ENCODE measurements at regions of chr6 and their contacts with region 1.

Region 1: DNA sequence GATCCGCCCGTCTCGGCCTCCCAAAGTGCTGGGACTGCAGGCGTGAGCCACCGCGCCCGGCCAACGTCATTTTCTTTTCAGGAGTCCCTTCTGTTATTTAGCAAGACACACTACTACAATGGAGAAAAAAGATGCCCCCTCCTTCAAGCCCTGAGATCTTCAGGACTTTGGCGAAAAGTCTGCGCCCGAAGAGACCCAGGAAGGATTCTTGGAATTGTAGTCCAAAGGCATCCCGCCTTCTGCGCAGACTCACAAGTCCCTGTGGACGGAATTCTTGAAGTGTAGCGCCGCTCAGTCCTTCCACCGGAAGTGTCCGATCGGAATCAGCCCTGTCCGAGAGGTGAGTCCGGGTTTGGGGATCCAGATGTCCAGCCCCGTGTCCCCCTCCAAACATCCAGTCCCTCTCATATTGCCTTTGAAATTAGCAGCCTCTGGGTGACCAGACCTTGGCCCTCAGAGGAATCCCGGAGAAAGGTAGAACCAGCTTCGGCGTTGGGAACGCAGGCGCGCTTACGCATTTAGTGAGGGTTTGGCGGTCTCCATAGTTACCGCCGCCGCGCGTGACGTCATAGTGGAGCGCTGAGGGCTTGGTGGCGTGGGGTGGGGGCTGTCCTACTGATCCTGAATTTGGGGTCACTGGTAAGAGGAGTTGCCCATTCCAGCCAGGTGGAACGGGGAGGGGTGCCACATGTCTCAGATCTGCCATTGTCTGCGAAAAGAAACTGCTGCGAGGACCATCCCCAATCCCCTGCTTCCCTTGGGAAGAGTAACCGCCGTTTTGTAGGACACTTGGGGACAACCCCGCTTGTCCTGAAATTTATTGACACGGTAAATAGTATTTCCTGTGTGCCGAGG is 490 bp downstream of the ZNF165 start:
- DNase-seq: peak; percentile 92
- H3K4me3 Mint-ChIP-seq: peak overlapping the region; percentile 96
- H3K27ac Mint-ChIP-seq: peak overlapping the region; percentile 97
- H3K4me1 Mint-ChIP-seq: peaks cover 20% of the 10 kb centered on the region
- H3K27me3 Mint-ChIP-seq: no peaks in the 10 kb centered on the region

Region 2: GRCh38 chr6:27908017-27908416 is 172.8 kb before region 1 on chr6:
- CTCF ChIA-PET with region 1: no interaction called
- POLR2A ChIA-PET with region 1: no interaction called
- intact Hi-C with region 1: no loop called
- DNase-seq: no peak
- H3K4me3 Mint-ChIP-seq: no peak overlapping the region
- H3K27ac Mint-ChIP-seq: no peak overlapping the region
- H3K4me1 Mint-ChIP-seq: peaks cover 2% of the 10 kb centered on the region
- H3K27me3 Mint-ChIP-seq: peaks cover 10% of the 10 kb centered on the region

Region 3: DNA sequence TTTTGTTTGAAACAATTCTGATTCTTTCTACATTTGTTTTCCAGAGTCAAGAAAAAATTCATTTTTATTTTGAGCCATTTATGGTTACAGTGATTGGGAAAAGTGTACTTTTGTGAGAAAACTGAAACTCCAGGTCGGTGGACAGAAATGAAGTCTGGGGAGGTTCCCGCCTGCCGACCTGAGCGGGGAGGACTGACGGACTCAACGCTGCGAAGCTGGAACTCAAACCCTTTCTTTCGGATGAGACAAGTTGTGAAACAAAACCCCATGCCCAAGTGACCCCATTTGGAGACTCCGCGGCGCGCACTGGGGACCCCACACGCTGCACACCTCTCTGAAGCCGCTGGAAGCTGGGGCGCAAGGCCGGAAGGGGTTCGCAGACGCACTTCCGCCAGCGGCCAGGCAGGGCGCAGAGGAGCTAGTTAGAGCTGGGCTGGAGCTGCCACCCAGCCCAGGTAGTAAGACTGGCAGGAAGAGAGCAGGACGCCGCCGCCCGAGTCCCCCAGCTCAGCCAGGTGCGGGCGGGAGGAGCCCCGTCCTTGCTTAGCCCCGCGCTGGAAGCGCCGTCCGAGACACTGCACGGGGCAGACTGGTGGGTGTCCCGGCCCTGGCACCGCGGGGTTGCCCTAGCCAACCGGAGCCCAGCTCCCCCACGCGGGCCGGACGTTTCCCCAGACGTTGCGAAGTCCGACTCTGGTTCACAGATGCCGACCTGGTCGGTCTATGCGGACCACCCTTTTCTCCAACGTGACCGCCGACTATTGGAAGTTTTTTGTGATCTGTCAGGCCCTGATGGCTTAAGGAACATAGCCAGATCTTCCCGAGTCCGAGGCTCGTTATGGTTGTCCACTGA is 23.8 kb after region 1 on chr6:
- CTCF ChIA-PET with region 1: no interaction called
- POLR2A ChIA-PET with region 1: interaction called, 8 read pairs
- intact Hi-C with region 1: loop called (anchors 1 kb)
- DNase-seq: peak; percentile 89
- H3K4me3 Mint-ChIP-seq: peak overlapping the region; percentile 80
- H3K27ac Mint-ChIP-seq: peak overlapping the region; percentile 88
- H3K4me1 Mint-ChIP-seq: peaks cover 4% of the 10 kb centered on the region
- H3K27me3 Mint-ChIP-seq: peaks cover 4% of the 10 kb centered on the region

Region 4: GRCh38 chr6:28124102-28124970 is 43.5 kb after region 1 on chr6 and contains the start of gene ZSCAN16:
- CTCF ChIA-PET with region 1: no interaction called
- POLR2A ChIA-PET with region 1: no interaction called
- intact Hi-C with region 1: no loop called
- DNase-seq: peak; percentile 84
- H3K4me3 Mint-ChIP-seq: peak within 1 kb of the TSS; percentile 91
- H3K27ac Mint-ChIP-seq: peak within 1 kb of the TSS; percentile 91
- H3K4me1 Mint-ChIP-seq: peaks cover 34% of the 10 kb centered on the region
- H3K27me3 Mint-ChIP-seq: no peaks in the 10 kb centered on the region
- total RNA-seq, gene ZSCAN16: 2.8 to 3.6 TPM

Region 5: GRCh38 chr6:28167068-28167467 is 86.2 kb after region 1 on chr6:
- CTCF ChIA-PET with region 1: no interaction called
- POLR2A ChIA-PET with region 1: no interaction called
- intact Hi-C with region 1: no loop called
- DNase-seq: no peak
- H3K4me3 Mint-ChIP-seq: no peak overlapping the region
- H3K27ac Mint-ChIP-seq: no peak overlapping the region
- H3K4me1 Mint-ChIP-seq: peaks cover 4% of the 10 kb centered on the region
- H3K27me3 Mint-ChIP-seq: peaks cover 2% of the 10 kb centered on the region

Region 6: GRCh38 chr6:28252009-28252975 is 171.4 kb after region 1 on chr6 and contains the start of gene ZKSCAN4:
- CTCF ChIA-PET with region 1: no interaction called
- POLR2A ChIA-PET with region 1: no interaction called
- intact Hi-C with region 1: loop called (anchors 5 kb)
- DNase-seq: peak; percentile 84
- H3K4me3 Mint-ChIP-seq: peak within 1 kb of the TSS; percentile 98
- H3K27ac Mint-ChIP-seq: peak within 1 kb of the TSS; percentile 73
- H3K4me1 Mint-ChIP-seq: peaks cover 17% of the 10 kb centered on the region
- H3K27me3 Mint-ChIP-seq: no peaks in the 10 kb centered on the region
- total RNA-seq, gene ZKSCAN4: 3.7 to 3.8 TPM

Region 7: DNA sequence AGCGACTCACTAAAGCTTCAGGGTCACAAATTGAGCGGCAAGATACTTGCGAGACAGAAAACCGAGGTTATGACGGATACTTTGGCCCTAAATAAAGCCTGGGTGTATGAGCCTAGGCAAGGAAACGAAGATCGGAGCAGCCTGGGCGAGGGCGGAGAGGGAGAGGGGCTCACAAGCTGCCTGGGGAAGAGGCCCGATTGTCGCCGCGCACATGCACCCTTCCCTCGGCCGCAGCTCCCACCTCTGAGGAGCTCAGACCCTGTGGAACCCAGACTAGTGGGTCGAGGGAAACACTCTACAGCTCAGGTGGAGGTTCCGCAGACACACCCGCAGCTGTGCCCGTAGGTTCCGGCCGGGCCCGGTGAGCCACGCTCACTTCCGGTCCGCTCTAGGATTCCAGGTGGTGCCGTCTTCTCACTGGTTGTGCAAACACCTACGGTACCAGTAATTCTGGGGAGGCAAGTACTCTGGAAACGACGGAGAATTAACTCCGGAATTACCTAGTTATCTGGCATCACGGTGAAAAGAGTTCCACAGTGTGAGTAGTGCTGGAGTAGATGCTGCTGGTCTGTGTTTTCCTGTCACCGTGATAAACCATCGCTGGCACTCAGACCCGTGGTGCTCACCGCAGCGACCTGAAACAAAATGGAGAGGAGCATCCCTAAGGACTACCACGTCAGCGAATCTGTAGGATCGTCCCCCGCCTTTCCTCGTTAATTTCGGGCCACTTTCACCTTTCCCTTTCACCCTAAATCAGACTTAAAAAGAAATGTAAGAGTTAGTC is 506.3 kb after region 1 on chr6:
- CTCF ChIA-PET with region 1: no interaction called
- POLR2A ChIA-PET with region 1: no interaction called
- intact Hi-C with region 1: loop called (anchors 2 kb)
- DNase-seq: peak; percentile 77
- H3K4me3 Mint-ChIP-seq: peak overlapping the region; percentile 73
- H3K27ac Mint-ChIP-seq: no peak overlapping the region
- H3K4me1 Mint-ChIP-seq: peaks cover 20% of the 10 kb centered on the region
- H3K27me3 Mint-ChIP-seq: peaks cover 73% of the 10 kb centered on the region